Activated CD8-positive, alpha-beta memory T cell treated with anti-CD3 and anti-CD28 coated beads, Interleukin-2, amount 10 ng/mL, durations not matched to agents 7 days and 5 days (primary cell): ENCODE measurements at regions of chr6 and their contacts with region 1.

Region 1: DNA sequence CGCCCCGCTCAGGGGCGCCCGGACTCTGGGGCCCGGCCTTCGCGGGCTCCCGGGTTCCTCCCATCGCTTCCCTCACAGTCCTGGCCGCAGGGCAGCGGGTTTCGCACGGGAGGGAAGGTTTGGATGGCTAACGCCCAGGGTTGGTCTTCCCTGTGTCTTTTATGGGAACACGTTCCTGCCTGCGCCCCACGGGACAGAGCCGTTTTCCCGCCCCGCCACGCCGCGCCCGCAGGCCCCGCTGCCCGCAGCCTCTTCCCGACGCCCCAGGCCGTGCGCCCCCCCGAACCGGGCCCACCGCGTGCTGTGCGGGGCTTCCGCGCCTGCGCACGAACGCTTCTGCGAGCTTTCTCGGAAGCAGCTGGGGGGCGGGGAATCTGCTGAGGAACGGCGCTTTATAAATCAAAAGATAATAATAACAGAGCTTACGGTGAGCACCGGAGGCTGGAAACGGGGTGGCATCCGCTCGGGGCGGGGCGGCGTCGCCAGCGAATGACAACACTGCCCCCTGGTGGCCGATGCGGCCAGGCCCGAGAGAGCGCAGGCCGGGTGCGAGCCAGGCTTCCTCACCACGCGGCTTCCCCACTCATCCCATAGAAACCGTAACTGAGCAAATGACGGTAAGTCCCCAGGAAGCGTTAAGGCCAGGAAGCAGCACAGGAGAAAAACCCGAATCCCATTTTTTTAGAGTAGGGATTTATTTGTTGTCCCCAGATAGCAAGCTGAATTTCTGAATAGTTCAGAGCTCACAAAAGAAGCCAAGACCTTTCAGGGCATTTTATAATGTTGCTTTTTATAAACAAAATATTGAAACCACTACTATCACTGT is 116.4 kb downstream of the MYLK4 start:
- DNase-seq: peak; percentile 83
- ATAC-seq: peak; percentile 97
- H3K4me3 Mint-ChIP-seq: peak overlapping the region; percentile 44
- H3K27ac Mint-ChIP-seq: no peak overlapping the region
- H3K4me1 Mint-ChIP-seq: peaks cover 2% of the 10 kb centered on the region
- H3K27me3 Mint-ChIP-seq: peaks cover 40% of the 10 kb centered on the region

Region 2: GRCh38 chr6:1596088-1596852 is 1038.1 kb before region 1 on chr6:
- CTCF ChIA-PET with region 1: interaction called, 36 read pairs
- DNase-seq: peak; percentile 67
- ATAC-seq: peak; percentile 75
- H3K4me3 Mint-ChIP-seq: no peak overlapping the region
- H3K27ac Mint-ChIP-seq: no peak overlapping the region
- H3K4me1 Mint-ChIP-seq: peaks cover 3% of the 10 kb centered on the region
- H3K27me3 Mint-ChIP-seq: peaks cover 64% of the 10 kb centered on the region

Region 3: DNA sequence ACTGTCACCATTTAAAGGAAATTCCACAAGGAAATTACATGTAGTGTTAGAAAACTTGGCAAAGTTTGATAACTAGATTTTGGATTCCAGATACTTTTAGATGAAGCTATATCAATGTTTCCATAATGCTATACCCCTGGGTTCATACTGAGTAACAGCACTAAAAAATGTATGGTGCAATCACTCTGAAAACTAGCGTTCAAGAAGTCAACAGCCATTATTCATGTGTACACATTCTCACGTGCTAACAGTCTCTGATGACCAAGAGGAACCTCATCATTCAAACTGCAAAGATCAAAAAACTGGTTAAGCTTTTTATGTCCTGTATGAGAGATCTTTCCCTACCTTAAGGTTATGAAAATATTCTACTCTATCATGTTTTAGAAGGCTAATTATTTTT is 586.5 kb before region 1 on chr6:
- CTCF ChIA-PET with region 1: no interaction called
- DNase-seq: no peak
- ATAC-seq: no peak
- H3K4me3 Mint-ChIP-seq: no peak overlapping the region
- H3K27ac Mint-ChIP-seq: no peak overlapping the region
- H3K4me1 Mint-ChIP-seq: no peaks in the 10 kb centered on the region
- H3K27me3 Mint-ChIP-seq: no peaks in the 10 kb centered on the region

Region 4: DNA sequence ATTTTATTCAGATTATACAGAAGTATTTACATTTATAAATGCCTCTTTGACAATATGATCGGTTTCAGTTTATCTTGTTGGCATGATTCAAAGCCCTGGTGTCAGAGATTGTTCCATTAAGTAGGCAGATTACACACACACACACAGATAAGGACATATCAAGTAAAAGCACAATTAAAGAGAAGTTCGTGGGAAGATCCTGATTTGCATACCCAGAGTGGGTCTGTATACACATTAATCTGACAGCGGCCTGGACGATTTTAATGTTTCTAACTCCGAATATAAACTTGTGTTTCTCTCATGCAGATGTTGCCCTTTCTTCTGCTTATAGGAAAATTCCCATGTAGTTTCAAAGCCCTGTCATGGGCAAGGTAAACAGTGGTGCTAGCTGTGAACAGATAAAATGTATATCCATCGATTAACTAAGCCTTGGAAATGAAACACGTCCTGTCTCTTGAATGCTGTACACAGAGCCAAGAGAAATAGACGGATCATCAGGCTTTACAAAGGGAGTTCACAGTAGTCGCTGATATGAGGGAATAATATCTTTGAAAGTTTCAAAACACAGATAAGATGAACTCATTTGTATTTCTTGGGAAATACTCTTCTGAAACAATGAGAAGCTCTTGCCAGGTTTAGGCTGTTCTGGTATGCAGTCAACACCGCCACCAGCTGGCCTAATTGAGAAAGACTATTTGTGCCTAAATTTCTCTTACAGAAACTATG is 280.8 kb before region 1 on chr6:
- CTCF ChIA-PET with region 1: interaction called, 15 read pairs
- DNase-seq: peak; percentile 70
- ATAC-seq: no peak
- H3K4me3 Mint-ChIP-seq: no peak overlapping the region
- H3K27ac Mint-ChIP-seq: no peak overlapping the region
- H3K4me1 Mint-ChIP-seq: no peaks in the 10 kb centered on the region
- H3K27me3 Mint-ChIP-seq: no peaks in the 10 kb centered on the region

Region 5: GRCh38 chr6:2497922-2498623 is 136.3 kb before region 1 on chr6:
- CTCF ChIA-PET with region 1: no interaction called
- DNase-seq: no peak
- ATAC-seq: no peak
- H3K4me3 Mint-ChIP-seq: no peak overlapping the region
- H3K27ac Mint-ChIP-seq: no peak overlapping the region
- H3K4me1 Mint-ChIP-seq: no peaks in the 10 kb centered on the region
- H3K27me3 Mint-ChIP-seq: peaks cover 24% of the 10 kb centered on the region

Region 6: GRCh38 chr6:2528156-2528555 is 106.2 kb before region 1 on chr6:
- CTCF ChIA-PET with region 1: interaction called, 14 read pairs
- DNase-seq: no peak
- ATAC-seq: no peak
- H3K4me3 Mint-ChIP-seq: no peak overlapping the region
- H3K27ac Mint-ChIP-seq: no peak overlapping the region
- H3K4me1 Mint-ChIP-seq: peaks cover 12% of the 10 kb centered on the region
- H3K27me3 Mint-ChIP-seq: peaks cover 69% of the 10 kb centered on the region

Region 7: GRCh38 chr6:2646346-2646745 is 12.0 kb after region 1 on chr6:
- CTCF ChIA-PET with region 1: interaction called, 27 read pairs
- DNase-seq: no peak
- ATAC-seq: no peak
- H3K4me3 Mint-ChIP-seq: no peak overlapping the region
- H3K27ac Mint-ChIP-seq: no peak overlapping the region
- H3K4me1 Mint-ChIP-seq: peaks cover 2% of the 10 kb centered on the region
- H3K27me3 Mint-ChIP-seq: peaks cover 44% of the 10 kb centered on the region

Region 8: GRCh38 chr6:2674857-2675256 is 40.5 kb after region 1 on chr6:
- CTCF ChIA-PET with region 1: no interaction called
- DNase-seq: no peak
- ATAC-seq: no peak
- H3K4me3 Mint-ChIP-seq: no peak overlapping the region
- H3K27ac Mint-ChIP-seq: no peak overlapping the region
- H3K4me1 Mint-ChIP-seq: no peaks in the 10 kb centered on the region
- H3K27me3 Mint-ChIP-seq: peaks cover 3% of the 10 kb centered on the region

Region 9: GRCh38 chr6:2749969-2750600 is 115.7 kb after region 1 on chr6:
- CTCF ChIA-PET with region 1: interaction called, 13 read pairs
- DNase-seq: peak; percentile 77
- ATAC-seq: peak; percentile 49
- H3K4me3 Mint-ChIP-seq: no peak overlapping the region
- H3K27ac Mint-ChIP-seq: no peak overlapping the region
- H3K4me1 Mint-ChIP-seq: peaks cover 16% of the 10 kb centered on the region
- H3K27me3 Mint-ChIP-seq: peaks cover 47% of the 10 kb centered on the region

Region 10: DNA sequence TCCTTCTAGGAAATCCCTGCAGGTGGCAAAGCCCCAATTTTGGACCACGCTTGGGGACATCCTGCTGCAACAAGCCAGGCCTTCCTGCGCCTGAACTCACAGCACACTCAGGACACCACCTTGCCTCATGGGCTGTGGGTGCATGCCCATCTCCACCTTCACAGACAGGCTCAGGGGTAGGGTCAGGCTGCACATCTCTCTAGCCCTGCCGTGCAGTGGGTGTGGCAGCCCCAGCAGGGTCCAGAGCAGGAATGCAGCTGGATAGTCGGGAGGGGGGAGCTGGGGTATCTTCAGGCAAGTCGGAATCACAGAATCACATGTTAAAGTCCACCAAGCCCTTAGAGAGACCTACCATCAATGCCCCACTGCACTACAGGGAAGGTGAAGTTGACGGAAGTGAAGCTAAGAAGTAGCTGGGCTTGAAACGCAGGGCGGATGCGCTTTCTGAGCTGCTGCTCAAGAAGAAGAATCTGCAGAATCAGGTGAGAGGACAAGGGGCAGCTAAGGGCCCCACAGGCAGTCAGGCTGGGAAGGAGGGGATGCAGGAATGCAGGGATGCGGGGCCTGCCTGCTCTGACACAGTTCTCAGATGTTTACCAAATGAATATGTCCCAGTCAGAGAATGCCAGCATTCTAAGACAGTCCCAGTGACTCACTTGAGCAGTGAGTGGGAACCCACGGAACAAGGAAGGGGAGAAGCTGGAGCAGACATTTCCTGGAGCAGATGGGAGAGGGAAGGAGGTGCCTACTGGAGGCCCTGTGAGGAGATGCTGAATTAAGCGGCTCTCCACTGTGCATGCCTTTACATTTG is 325.8 kb after region 1 on chr6:
- CTCF ChIA-PET with region 1: no interaction called
- DNase-seq: no peak
- ATAC-seq: no peak
- H3K4me3 Mint-ChIP-seq: no peak overlapping the region
- H3K27ac Mint-ChIP-seq: no peak overlapping the region
- H3K4me1 Mint-ChIP-seq: no peaks in the 10 kb centered on the region
- H3K27me3 Mint-ChIP-seq: no peaks in the 10 kb centered on the region